Activated naive CD4-positive, alpha-beta T cell treated with anti-CD3 and anti-CD28 coated beads for 36 hours (primary cell): ENCODE measurements at regions of chr2 and their contacts with region 1.

Region 1: GRCh38 chr2:11778923-11779757 is 32.7 kb downstream of the LPIN1 start:
- DNase-seq: peak; percentile 91
- H3K4me3 Mint-ChIP-seq: peak overlapping the region; percentile 45
- H3K27ac Mint-ChIP-seq: peak overlapping the region; percentile 80
- H3K4me1 Mint-ChIP-seq: peaks cover 44% of the 10 kb centered on the region
- H3K27me3 Mint-ChIP-seq: no peaks in the 10 kb centered on the region

Region 2: DNA sequence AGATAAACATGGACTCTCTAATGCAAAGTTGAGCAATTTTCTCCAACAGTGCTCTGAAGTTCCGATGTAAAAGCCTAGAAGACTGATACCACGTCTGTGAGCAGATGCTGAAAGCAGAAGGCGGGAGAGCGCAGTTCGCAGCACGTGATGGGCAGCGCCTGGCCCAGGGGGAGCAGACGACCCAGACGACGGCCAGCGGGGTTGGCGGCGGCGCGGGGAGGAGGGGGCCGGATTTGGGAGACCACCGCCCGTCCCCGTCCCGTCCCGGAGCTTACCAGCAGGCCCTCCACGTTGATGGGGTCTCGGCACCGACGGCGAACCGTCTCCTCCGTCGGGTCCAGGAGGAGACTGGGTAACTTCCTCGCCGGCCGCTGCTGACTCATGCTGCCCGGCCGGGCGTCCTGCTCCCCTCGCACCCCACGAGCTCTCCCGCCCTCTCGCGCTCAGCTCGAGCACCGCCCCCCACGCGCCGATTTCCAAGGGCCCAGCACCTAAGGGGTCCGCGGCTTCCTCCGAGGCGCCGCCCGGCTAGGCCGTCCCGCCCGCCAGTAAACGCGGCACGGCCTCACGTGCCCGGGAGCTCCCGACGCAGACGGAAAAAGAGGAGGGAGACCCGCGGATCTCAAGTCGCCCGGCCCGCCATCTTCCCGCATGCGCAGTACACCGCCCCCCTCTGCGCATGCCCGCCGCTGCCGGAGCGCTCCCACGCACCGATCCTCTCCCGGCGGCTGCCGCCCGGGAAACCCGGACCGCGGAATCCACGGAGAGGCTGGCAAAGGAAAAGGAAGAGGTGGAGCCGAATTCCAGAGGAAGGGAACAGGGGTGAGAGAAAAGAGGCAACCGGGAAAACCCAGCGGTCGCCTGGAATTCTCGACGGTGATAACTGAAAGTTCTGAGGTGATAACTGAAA is 313.4 kb before region 1 on chr2 and contains the start of gene E2F6:
- CTCF ChIA-PET with region 1: no interaction called
- intact Hi-C with region 1: loop called (anchors 5 kb)
- DNase-seq: peak; percentile 89
- H3K4me3 Mint-ChIP-seq: peak within 1 kb of the TSS; percentile 91
- H3K27ac Mint-ChIP-seq: peak within 1 kb of the TSS; percentile 83
- H3K4me1 Mint-ChIP-seq: peaks cover 40% of the 10 kb centered on the region
- H3K27me3 Mint-ChIP-seq: no peaks in the 10 kb centered on the region
- total RNA-seq, gene E2F6: 8.7 to 9.4 TPM

Region 3: GRCh38 chr2:11688222-11689069 is 90.7 kb before region 1 on chr2:
- CTCF ChIA-PET with region 1: interaction called, 410 read pairs
- intact Hi-C with region 1: loop called (anchors 1 kb)
- DNase-seq: peak; percentile 89
- H3K4me3 Mint-ChIP-seq: peak overlapping the region; percentile 32
- H3K27ac Mint-ChIP-seq: no peak overlapping the region
- H3K4me1 Mint-ChIP-seq: peaks cover 10% of the 10 kb centered on the region
- H3K27me3 Mint-ChIP-seq: peaks cover 5% of the 10 kb centered on the region

Region 4: DNA sequence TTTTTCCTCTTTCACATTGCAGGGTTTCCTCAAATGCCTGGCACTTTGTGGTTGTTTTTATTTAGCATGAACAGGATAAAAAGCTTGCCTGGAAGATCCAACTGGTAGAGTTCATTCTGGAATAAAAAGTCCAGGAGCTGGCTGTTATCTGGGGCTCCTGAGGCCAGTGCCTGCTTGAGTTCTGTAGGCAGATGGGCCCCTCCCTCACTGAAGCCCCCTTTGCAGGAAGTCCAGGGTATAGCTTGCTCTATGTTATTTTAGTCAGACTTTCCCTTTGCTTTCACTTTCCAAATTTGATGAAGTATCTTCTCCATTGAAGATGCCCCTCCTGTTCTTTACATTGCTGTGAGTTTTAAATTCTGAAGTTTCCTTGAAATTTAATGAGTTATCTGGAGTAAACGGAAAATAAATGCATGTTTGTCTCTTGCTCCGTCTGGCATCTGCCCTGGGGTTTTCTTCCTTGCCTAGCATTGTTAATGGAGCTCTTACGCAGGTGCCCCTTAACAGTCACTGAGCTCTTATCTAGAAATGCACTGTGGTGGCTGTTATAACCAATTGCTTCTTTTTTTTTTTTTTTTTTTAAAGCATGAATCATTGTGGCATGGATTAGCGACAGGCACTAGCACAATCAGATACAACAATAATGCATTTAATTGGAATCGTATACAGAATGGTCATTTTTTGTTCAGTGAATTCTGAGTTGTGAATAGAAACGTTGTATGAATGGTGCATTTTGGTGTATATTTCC is 59.7 kb before region 1 on chr2:
- CTCF ChIA-PET with region 1: interaction called, 10 read pairs
- intact Hi-C with region 1: no loop called
- DNase-seq: no peak
- H3K4me3 Mint-ChIP-seq: peak overlapping the region; percentile 2
- H3K27ac Mint-ChIP-seq: no peak overlapping the region
- H3K4me1 Mint-ChIP-seq: peaks cover 7% of the 10 kb centered on the region
- H3K27me3 Mint-ChIP-seq: peaks cover 3% of the 10 kb centered on the region

Region 5: DNA sequence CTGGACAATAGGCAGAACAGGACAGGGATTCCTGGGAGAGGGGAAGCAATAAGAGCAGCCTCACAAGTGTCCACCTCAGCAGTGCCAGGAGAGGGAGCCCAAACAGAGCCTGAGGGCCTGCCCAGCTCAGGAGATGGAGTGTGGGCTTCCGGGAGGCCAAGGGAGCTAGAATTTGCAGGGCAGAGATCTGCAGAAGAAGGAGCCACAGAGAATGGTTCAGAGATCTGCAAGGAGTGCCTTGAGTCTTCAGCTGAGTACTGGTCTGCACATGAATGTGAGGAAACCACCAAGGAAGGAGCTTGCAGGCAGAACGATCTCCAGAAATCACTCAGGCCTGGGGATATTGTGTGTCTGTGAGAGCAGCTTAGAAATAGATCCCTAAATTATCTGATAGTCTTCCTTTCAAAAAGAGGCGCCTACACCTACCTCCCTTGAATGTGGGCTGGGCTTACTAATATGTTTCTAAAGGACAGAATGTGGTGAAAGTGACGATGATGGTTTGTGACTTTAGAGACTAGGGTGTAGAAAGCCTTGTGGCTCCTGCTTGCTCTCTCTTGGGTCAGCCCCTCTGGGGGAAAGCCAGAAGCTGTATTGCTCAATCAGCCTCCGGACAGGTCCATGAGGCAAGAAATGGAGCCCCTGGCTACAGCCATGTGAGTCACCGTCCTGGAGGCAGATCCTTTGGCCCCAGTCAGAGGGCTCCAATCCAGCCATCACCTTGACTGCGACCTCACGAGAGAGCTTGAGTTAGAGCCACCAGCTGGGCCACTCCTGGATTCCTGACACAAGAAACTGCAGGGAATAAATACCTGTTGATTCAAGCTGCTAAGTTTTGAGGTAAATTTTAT is 40.3 kb before region 1 on chr2:
- CTCF ChIA-PET with region 1: interaction called, 169 read pairs
- intact Hi-C with region 1: loop called (anchors 1 kb)
- DNase-seq: peak; percentile 50
- H3K4me3 Mint-ChIP-seq: no peak overlapping the region
- H3K27ac Mint-ChIP-seq: no peak overlapping the region
- H3K4me1 Mint-ChIP-seq: peaks cover 16% of the 10 kb centered on the region
- H3K27me3 Mint-ChIP-seq: no peaks in the 10 kb centered on the region

Region 6: GRCh38 chr2:11743846-11744553 is 35.1 kb before region 1 on chr2:
- CTCF ChIA-PET with region 1: interaction called, 169 read pairs
- intact Hi-C with region 1: loop called (anchors 1 kb)
- DNase-seq: peak; percentile 92
- H3K4me3 Mint-ChIP-seq: no peak overlapping the region
- H3K27ac Mint-ChIP-seq: peak overlapping the region; percentile 69
- H3K4me1 Mint-ChIP-seq: peaks cover 47% of the 10 kb centered on the region
- H3K27me3 Mint-ChIP-seq: no peaks in the 10 kb centered on the region

Region 7: GRCh38 chr2:11790228-11790627 is 11.1 kb after region 1 on chr2:
- CTCF ChIA-PET with region 1: interaction called, 11 read pairs
- intact Hi-C with region 1: no loop called
- DNase-seq: no peak
- H3K4me3 Mint-ChIP-seq: no peak overlapping the region
- H3K27ac Mint-ChIP-seq: no peak overlapping the region
- H3K4me1 Mint-ChIP-seq: peaks cover 2% of the 10 kb centered on the region
- H3K27me3 Mint-ChIP-seq: no peaks in the 10 kb centered on the region